PC-9 (cell line): ENCODE measurements at regions of chr7 and their contacts with region 1.

Region 1: GRCh38 chr7:75842836-75843446 is 29.3 kb upstream of the CCL24 start:
- DNase-seq: peak; percentile 43 to 92
- H3K4me3 ChIP-seq: no peak overlapping the region
- H3K27ac ChIP-seq: peak overlapping the region; percentile 47
- H3K4me1 ChIP-seq: peaks cover 22% of the 10 kb centered on the region
- H3K27me3 ChIP-seq: no peaks in the 10 kb centered on the region
- CTCF ChIP-seq: no peak

Region 2: GRCh38 chr7:75776295-75776971 is 66.5 kb before region 1 on chr7:
- CTCF ChIA-PET with region 1: no interaction called
- POLR2A ChIA-PET with region 1: no interaction called
- intact Hi-C with region 1: loop called (anchors 10 kb)
- DNase-seq: peak in 1 of 2 experiments; percentile 61
- H3K4me3 ChIP-seq: no peak overlapping the region
- H3K27ac ChIP-seq: no peak overlapping the region
- H3K4me1 ChIP-seq: peaks cover 14% of the 10 kb centered on the region
- H3K27me3 ChIP-seq: no peaks in the 10 kb centered on the region
- CTCF ChIP-seq: no peak

Region 3: DNA sequence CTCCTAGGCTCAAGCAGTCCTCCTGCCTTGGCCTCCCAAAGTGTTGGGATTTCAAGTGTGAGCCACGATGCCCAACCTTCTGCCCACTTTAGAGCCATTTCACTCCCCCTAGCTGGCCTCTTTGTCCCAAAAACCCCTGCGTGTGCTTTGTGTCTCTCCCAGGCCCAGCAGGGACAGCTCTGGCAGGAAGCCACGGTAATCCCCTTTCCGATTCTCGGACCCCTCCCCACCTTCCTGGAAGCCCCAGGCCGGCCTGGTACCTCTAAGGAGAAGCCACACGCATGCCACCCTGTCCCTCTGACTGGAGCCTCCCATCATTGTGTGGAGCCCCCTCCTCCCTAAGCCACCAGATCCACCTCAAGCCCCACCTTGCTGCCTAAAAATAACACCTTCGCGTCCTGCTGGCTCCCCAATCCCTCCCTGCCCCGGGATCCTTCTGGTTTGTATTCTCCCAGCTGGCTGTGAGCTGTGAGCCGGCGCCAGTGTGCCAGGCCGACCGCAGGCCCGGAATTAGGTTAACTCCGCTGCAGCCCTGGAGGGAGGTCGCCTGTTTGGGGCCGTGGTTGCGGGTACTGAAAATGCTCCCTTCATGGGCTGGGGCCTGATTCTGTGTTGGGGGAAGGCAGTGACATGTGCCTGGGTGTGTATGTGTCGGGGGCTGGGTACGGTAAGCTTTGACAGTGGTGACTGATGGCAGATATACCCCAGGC is 342.4 kb after region 1 on chr7:
- CTCF ChIA-PET with region 1: interaction called, 14 read pairs
- POLR2A ChIA-PET with region 1: no interaction called
- intact Hi-C with region 1: no loop called
- DNase-seq: no peak
- H3K4me3 ChIP-seq: no peak overlapping the region
- H3K27ac ChIP-seq: no peak overlapping the region
- H3K4me1 ChIP-seq: no peaks in the 10 kb centered on the region
- H3K27me3 ChIP-seq: 0 out of 2 replicates have a peak, but pooled peaks cover 3% of the 10 kb centered on the region
- CTCF ChIP-seq: no peak

Region 4: GRCh38 chr7:77199013-77199966 is 1356.3 kb after region 1 on chr7 and contains the start of gene FGL2:
- CTCF ChIA-PET with region 1: no interaction called
- POLR2A ChIA-PET with region 1: no interaction called
- intact Hi-C with region 1: no loop called
- DNase-seq: no peak
- H3K4me3 ChIP-seq: no peak within 1 kb of the TSS
- H3K27ac ChIP-seq: no peak within 1 kb of the TSS
- H3K4me1 ChIP-seq: no peaks in the 10 kb centered on the region
- H3K27me3 ChIP-seq: no peaks in the 10 kb centered on the region
- CTCF ChIP-seq: no peak
- total RNA-seq, gene FGL2: not detected in 2 replicates